A549 (cell line): ENCODE measurements at regions of chr16 and their contacts with region 1.

Region 1: GRCh38 chr16:86563489-86564345 is 2.9 kb upstream of the FOXC2 start:
- DNase-seq: peak; percentile 50 to 86
- ATAC-seq: peak; percentile 51 to 87; a peak in 5 of 6 replicates
- H3K4me3 ChIP-seq: peak overlapping the region; percentile 42
- H3K27ac ChIP-seq: peak overlapping the region; percentile 71 to 79
- H3K4me1 ChIP-seq: peaks cover 9% of the 10 kb centered on the region; the same call in 1 of the 3 replicates
- CTCF ChIP-seq: peak; percentile 100
- EP300 ChIP-seq: no peak
- POLR2A ChIP-seq: no peak
- RAD21 ChIP-seq: peak; percentile 100

Region 2: GRCh38 chr16:86297866-86298757 is 265.6 kb before region 1 on chr16:
- CTCF ChIA-PET with region 1: no interaction called
- POLR2A ChIA-PET with region 1: no interaction called
- DNase-seq: no peak
- ATAC-seq: peak in 1 of 2 experiments; percentile 30; a peak in 3 of 6 replicates
- H3K4me3 ChIP-seq: no peak overlapping the region
- H3K27ac ChIP-seq: no peak overlapping the region
- H3K4me1 ChIP-seq: no peaks in the 10 kb centered on the region
- CTCF ChIP-seq: no peak
- EP300 ChIP-seq: no peak
- POLR2A ChIP-seq: no peak
- RAD21 ChIP-seq: no peak

Region 3: GRCh38 chr16:86432691-86433090 is 131.0 kb before region 1 on chr16:
- CTCF ChIA-PET with region 1: no interaction called
- POLR2A ChIA-PET with region 1: no interaction called
- DNase-seq: no peak
- ATAC-seq: no peak
- H3K4me3 ChIP-seq: no peak overlapping the region
- H3K27ac ChIP-seq: no peak overlapping the region
- H3K4me1 ChIP-seq: no peaks in the 10 kb centered on the region
- CTCF ChIP-seq: no peak
- EP300 ChIP-seq: no peak
- POLR2A ChIP-seq: no peak
- RAD21 ChIP-seq: no peak

Region 4: GRCh38 chr16:86584071-86584685 is 20.5 kb after region 1 on chr16:
- CTCF ChIA-PET with region 1: interaction called, 10 read pairs
- POLR2A ChIA-PET with region 1: no interaction called
- DNase-seq: peak in 1 of 2 experiments; percentile 50
- ATAC-seq: peak in 1 of 2 experiments; percentile 61; a peak in 3 of 6 replicates
- H3K4me3 ChIP-seq: no peak overlapping the region
- H3K27ac ChIP-seq: peak overlapping the region; percentile 55 to 68
- H3K4me1 ChIP-seq: peaks cover 33% of the 10 kb centered on the region
- CTCF ChIP-seq: no peak
- EP300 ChIP-seq: no peak
- POLR2A ChIP-seq: no peak
- RAD21 ChIP-seq: no peak

Region 5: DNA sequence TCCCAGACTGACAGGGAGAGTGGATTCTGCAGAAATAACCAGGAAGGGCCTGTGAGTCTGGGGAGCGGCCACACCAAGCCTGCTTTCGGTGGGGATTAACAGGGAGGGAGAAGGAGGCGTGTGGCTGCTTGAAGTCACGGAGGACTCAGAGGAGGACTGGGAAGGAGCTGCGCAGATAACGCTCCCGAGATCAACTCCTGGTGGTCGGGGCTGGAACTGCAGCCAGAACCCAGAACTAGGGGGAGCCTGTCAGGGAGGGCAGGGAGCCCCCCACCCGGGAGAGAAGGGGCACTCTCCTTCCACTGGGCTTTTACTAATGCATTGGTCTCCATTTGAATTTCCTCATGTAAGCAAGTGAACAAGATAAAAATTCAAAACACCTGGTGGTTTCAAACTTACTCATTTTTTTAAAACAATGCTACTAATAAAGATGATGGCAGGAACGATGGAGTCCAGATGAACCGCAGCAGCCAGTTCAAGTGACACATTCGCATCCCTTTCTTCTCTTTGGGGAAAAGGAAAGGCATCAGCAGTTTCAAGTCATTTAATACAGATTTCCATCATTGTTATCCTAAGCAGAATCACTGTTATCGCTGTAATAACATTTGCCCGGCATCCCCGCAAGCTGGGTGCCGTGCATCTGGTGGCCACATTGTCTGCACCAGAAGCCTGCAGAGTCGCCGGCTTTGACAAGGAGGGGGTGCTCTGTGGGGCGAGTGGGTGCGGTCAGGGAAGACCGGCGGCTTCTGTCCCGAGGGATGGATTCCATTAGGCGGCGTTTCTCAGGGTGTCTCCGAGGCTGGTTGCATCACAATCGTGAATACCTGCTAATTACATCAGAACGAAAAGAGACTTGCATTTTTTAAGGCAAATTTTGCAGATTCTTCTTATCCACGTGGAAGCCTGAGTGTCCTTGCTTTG is 197.7 kb after region 1 on chr16:
- CTCF ChIA-PET with region 1: interaction called, 20 read pairs
- POLR2A ChIA-PET with region 1: no interaction called
- DNase-seq: peak; percentile 62 to 69
- ATAC-seq: peak; percentile 90 to 96
- H3K4me3 ChIP-seq: peak overlapping the region; percentile 24; the same call in 1 of the 3 replicates
- H3K27ac ChIP-seq: peak overlapping the region; percentile 5 to 69; a peak in 3 of 6 replicates
- H3K4me1 ChIP-seq: no peaks in the 10 kb centered on the region
- CTCF ChIP-seq: peak; percentile 56
- EP300 ChIP-seq: no peak
- POLR2A ChIP-seq: no peak
- RAD21 ChIP-seq: peak; percentile 53 to 58

Region 6: GRCh38 chr16:87043231-87044031 is 479.7 kb after region 1 on chr16:
- CTCF ChIA-PET with region 1: interaction called, 13 read pairs
- POLR2A ChIA-PET with region 1: no interaction called
- DNase-seq: no peak
- ATAC-seq: no peak; a peak in 1 of 6 replicates
- H3K4me3 ChIP-seq: no peak overlapping the region
- H3K27ac ChIP-seq: no peak overlapping the region
- H3K4me1 ChIP-seq: no peaks in the 10 kb centered on the region
- CTCF ChIP-seq: no peak
- EP300 ChIP-seq: no peak
- POLR2A ChIP-seq: no peak
- RAD21 ChIP-seq: no peak

Region 7: DNA sequence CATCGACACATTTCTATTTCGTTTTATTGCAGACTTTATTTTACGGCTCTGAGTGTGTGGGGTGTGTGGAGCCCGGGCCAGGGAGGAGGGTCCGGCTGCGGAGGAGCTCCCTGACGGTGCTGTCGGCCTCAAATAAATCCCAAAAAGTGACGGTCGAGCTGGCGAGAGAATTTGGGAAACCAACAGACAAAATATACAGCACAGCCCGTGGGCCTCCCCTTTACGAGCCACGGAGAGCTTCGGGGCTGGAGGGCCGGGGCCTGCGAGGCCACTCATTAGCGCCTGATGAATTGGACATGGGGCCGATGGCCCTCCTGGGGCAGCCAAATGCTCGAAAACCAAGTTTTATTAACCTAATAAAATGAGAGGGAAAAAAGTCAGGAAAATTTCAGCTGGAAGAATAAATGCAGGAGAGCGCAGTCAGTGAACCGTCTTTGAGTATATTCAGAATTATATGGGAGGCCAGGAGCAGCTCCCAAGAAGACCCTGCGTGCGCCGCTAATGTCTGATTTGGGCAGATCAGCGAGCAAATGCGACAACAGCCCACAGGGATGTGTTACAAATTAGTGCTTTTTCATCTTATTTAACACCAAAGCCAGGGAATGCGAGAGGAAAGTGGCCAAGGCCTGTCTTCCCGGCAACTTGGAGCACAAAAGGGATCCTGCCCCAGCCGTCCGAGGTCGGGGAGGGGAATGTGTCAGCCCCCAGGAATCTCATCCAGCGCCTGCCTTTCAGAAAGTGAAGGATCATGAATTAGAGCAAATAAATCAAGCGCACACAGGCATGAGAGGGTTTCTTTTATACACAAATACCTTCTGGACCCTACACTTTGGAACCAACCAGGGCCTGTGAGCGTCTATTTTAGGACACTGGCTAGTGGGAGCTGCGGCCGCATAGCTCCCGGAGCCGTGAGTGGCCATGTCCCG is 504.4 kb after region 1 on chr16:
- CTCF ChIA-PET with region 1: interaction called, 170 read pairs
- POLR2A ChIA-PET with region 1: no interaction called
- DNase-seq: no peak
- ATAC-seq: no peak
- H3K4me3 ChIP-seq: no peak overlapping the region
- H3K27ac ChIP-seq: no peak overlapping the region
- H3K4me1 ChIP-seq: no peaks in the 10 kb centered on the region
- CTCF ChIP-seq: no peak
- EP300 ChIP-seq: no peak
- POLR2A ChIP-seq: no peak
- RAD21 ChIP-seq: no peak